Natural killer cell (primary cell): ENCODE measurements at regions of chr13 and their contacts with region 1.

Region 1: DNA sequence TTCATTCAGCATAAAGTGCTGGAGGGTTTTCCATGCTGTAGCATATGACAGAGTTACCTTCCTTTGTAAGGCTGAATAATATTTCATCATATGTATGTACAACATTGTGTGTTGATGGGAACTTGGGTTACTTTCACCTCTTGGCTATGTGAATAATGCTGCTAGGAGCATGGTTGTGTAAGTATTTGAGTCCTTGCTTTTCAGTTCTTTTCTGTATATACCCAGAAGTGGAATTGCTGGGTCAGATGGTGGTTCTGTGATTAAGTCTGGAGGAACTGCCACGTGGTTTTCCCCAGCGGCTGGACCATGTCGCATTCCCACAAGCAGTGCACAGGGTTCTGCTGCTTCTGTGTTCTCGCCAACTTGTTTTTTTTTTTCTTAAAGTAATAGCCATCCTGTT is 101.2 kb upstream of the TEX29 start:
- DNase-seq: no peak
- ATAC-seq: no peak
- H3K4me3 ChIP-seq: no peak overlapping the region
- H3K4me3 Mint-ChIP-seq: no peak overlapping the region
- H3K27ac ChIP-seq: no peak overlapping the region
- H3K27ac Mint-ChIP-seq: peak overlapping the region in 1 of 2 donors; percentile 35
- H3K4me1 ChIP-seq: peaks cover 8% of the 10 kb centered on the region
- H3K4me1 Mint-ChIP-seq: peaks cover 58 to 65% of the 10 kb centered on the region in 2 donors
- H3K27me3 ChIP-seq: no peaks in the 10 kb centered on the region
- H3K27me3 Mint-ChIP-seq: no peaks in the 10 kb centered on the region
- CTCF ChIP-seq: no peak

Region 2: GRCh38 chr13:111066544-111066943 is 152.7 kb before region 1 on chr13:
- intact Hi-C with region 1: loop called (anchors 1 kb)
- DNase-seq: no peak
- ATAC-seq: no peak
- H3K4me3 ChIP-seq: no peak overlapping the region
- H3K4me3 Mint-ChIP-seq: peak overlapping the region; percentile 85
- H3K27ac ChIP-seq: no peak overlapping the region
- H3K27ac Mint-ChIP-seq: no peak overlapping the region
- H3K4me1 ChIP-seq: peaks cover 12% of the 10 kb centered on the region
- H3K4me1 Mint-ChIP-seq: peaks cover 10 to 12% of the 10 kb centered on the region in 2 donors
- H3K27me3 ChIP-seq: peaks cover 15% of the 10 kb centered on the region
- H3K27me3 Mint-ChIP-seq: peaks cover 45 to 74% of the 10 kb centered on the region in 2 donors
- CTCF ChIP-seq: no peak

Region 3: DNA sequence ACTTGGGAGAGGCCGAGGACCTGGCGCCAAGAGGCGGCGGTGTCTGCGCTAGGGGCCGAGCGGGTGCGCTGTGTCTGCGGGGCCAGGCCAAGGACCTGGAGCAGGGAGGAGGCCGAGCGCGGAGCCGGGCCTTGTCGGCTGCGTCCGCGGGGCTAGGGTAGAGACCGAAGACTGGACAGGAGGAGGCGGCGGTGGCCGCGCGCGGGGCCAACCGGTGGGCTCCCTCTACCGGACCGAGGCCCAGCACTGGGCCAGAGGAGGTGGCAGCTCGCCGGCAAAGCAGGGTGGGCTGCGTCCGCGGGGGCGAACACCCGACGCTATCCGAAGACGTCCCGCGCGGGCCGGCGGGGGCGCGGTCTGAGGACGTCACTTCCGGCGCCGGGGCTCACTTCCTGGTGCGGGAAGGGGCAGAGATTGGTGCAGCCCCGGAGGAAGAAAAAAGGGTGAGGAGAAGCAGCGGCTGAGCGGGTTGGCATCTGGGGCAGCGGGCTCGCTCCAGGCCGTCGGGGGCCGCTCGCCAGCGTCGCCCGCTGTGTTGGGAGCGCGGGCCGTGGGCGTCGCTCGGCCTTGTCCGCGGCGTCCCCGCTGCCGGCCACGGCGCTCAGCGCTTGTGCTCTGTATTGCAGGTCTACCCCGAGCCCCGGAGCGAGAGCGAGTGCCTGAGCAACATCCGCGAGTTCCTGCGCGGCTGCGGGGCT is 65.9 kb before region 1 on chr13:
- intact Hi-C with region 1: loop called (anchors 1 kb)
- DNase-seq: peak; percentile 93
- ATAC-seq: peak; percentile 82 to 93 (median 88)
- H3K4me3 ChIP-seq: peak overlapping the region; percentile 43
- H3K4me3 Mint-ChIP-seq: peak overlapping the region; percentile 93
- H3K27ac ChIP-seq: peak overlapping the region; percentile 71
- H3K27ac Mint-ChIP-seq: peak overlapping the region; percentile 90 to 92
- H3K4me1 ChIP-seq: peaks cover 15% of the 10 kb centered on the region
- H3K4me1 Mint-ChIP-seq: peaks cover 21 to 25% of the 10 kb centered on the region in 2 donors
- H3K27me3 ChIP-seq: no peaks in the 10 kb centered on the region
- H3K27me3 Mint-ChIP-seq: peaks cover 3 to 4% of the 10 kb centered on the region in 2 donors
- CTCF ChIP-seq: no peak

Region 4: DNA sequence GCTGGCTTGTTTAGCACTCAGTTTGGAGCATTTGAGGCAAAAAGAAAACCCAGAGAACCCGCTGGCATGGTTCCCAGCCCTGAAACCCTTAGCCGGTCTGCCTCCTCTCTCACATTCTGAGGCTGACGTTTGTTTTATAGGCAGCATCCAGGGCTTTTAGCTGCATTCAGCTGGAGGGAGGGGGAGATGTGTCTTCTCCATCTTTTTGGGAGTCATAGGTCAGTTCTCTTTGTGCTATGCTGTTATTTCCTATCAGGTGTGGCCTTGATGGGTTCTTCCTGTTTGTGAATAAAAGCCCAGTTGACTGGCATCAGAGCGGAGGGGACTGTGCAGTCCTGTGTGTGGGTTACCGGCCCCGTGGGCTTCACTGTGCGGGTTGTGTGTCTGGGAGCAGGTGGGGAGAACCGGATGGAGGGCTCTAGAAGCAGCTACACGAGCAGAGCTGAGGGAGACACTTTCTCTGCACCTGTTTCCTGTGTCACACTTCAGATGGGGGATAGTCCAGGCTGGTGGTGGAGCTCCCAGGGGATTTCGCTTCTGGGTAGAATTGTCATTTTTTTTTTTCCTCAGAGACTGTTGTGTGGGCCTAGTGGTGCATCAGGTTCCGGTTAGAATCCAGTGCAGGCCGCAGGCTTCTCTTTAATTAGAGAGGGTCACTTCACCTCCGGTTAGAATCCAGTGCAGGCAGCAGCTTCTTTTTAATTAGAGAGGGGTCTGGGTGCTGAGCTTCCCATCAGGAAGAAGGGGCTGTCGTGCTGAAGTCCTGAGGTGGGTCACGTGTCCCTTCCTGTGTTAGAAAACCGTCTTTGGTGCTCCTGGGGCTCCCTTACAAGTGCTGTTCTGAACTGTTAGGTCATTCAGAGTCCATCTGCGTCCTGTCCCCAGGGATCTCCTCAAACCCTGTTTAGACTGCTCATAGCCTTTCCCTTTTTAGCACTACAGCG is 34.5 kb before region 1 on chr13:
- intact Hi-C with region 1: loop called (anchors 5 kb)
- DNase-seq: peak in 1 of 2 donors; percentile 75
- ATAC-seq: peak; percentile 67 to 75 (median 75)
- H3K4me3 ChIP-seq: peak overlapping the region; percentile 11
- H3K4me3 Mint-ChIP-seq: peak overlapping the region; percentile 89
- H3K27ac ChIP-seq: peak overlapping the region; percentile 60
- H3K27ac Mint-ChIP-seq: peak overlapping the region; percentile 89
- H3K4me1 ChIP-seq: peaks cover 65% of the 10 kb centered on the region
- H3K4me1 Mint-ChIP-seq: peaks cover 93 to 97% of the 10 kb centered on the region in 2 donors
- H3K27me3 ChIP-seq: no peaks in the 10 kb centered on the region
- H3K27me3 Mint-ChIP-seq: no peaks in the 10 kb centered on the region
- CTCF ChIP-seq: no peak

Region 5: GRCh38 chr13:111281751-111282311 is 62.6 kb after region 1 on chr13:
- intact Hi-C with region 1: no loop called
- DNase-seq: no peak
- ATAC-seq: no peak
- H3K4me3 ChIP-seq: no peak overlapping the region
- H3K4me3 Mint-ChIP-seq: no peak overlapping the region
- H3K27ac ChIP-seq: no peak overlapping the region
- H3K27ac Mint-ChIP-seq: no peak overlapping the region
- H3K4me1 ChIP-seq: no peaks in the 10 kb centered on the region
- H3K4me1 Mint-ChIP-seq: no peaks in the 10 kb centered on the region
- H3K27me3 ChIP-seq: no peaks in the 10 kb centered on the region
- H3K27me3 Mint-ChIP-seq: no peaks in the 10 kb centered on the region
- CTCF ChIP-seq: no peak